ENCODE measurements at regions of chr9 and their contacts with region 1.

Region 1: GRCh38 chr9:137240861-137241489 is at the start of gene TUBB4B:
- DNase-seq: peak; percentile 99
- H3K4me3 ChIP-seq: peak within 1 kb of the TSS; percentile 97
- H3K27me3 ChIP-seq: no peaks in the 10 kb centered on the region
- CTCF ChIP-seq: no peak
- polyA plus RNA-seq, gene TUBB4B: 263 and 385 TPM in 2 replicates

Region 2: DNA sequence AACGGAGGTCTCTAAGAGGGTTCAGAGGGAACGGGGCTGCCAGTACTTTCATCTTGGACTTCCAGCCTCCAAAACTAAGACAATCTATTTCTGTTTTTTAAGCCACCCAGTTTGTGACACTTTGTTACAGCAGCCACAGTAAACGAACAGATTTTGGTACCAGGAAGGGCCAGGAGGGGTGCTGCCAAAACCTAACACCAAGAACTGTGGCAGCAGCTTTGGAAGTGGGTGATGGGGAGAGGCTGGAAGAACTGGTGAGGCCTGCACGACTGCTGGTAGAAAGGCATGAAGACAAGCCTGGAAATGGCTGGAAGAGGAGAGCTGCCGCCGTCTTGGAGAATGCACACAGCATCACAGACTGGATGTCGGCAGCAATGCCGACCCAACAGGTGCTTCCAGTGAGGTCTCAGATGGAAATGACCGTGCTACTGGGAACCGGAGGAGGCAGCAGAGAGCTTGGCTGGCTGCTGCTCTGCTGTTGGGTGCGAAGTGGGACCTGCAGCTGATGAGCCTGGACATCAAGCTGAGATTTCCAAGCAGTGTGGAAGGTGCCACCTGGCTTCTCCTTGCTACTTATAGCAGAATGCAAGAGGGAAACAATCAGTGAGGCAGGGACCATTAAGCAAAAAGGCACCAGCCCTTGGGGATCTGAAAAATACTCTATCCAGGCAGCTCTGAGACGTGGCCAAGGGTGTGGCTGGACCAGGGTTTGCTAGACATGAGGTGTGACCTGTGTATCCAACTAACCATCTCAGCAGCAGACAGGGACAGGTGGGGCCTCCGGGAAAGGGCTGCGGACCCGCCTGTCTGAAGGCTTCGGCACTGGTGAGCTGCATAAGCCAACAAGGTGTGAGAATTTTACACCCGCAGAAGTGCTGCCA is 64.4 kb before region 1 on chr9:
- CTCF ChIA-PET with region 1: interaction called, 11 read pairs
- POLR2A ChIA-PET with region 1: no interaction called
- DNase-seq: no peak
- H3K4me3 ChIP-seq: no peak overlapping the region
- H3K27me3 ChIP-seq: no peaks in the 10 kb centered on the region
- CTCF ChIP-seq: peak; percentile 66

Region 3: GRCh38 chr9:137254624-137255447 is 13.9 kb after region 1 on chr9 and contains the start of gene NELFB:
- CTCF ChIA-PET with region 1: interaction called, 14 read pairs
- POLR2A ChIA-PET with region 1: interaction called, 4 read pairs
- DNase-seq: no peak
- H3K4me3 ChIP-seq: peak within 1 kb of the TSS; percentile 99
- H3K27me3 ChIP-seq: no peaks in the 10 kb centered on the region
- CTCF ChIP-seq: no peak
- polyA plus RNA-seq, gene NELFB: 26.6 and 51.9 TPM in 2 replicates